Posterior cingulate gyrus (tissue), 11 donors: ENCODE measurements at regions of chr17 and their contacts with region 1.

Region 1: GRCh38 chr17:81484195-81484979 is 28.2 kb downstream of the ACTG1 start:
- DNase-seq: peak; percentile 79 to 99 (median 90)

Region 2: DNA sequence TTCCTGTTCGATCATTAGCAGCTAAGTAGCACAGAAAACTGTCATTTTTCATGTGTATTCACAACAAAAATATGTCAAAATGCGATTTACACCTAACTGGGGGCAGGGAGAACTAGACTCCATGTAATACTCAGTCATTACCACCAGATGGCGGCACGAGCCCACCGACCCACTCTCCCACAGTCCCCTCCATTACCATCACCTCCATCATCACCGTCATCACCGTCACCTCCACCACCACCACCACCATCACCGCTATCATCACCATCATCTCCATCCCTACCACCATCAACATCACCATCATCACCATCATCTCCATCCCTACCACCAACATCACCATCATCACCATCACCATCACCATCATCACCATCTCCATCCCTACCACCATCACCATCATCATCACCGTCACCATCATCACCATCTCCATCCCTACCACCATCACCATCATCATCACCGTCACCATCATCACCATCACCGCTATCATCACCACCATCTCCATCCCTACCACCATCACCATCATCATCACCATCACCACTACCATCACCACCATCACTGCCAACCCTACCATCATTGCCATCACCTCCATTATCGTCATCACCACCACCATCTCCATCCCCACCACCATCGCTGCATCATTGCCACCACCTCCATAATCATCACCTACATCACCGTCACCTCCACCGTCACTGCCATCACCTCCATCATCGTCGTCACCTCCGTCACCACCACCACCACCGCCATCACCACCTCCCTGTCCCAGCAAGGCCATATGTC is 230.8 kb before region 1 on chr17:
- intact Hi-C with region 1: loop called (anchors 1 kb)
- DNase-seq: peak in 7 of 10 donors; percentile 53 to 91 (median 65)

Region 3: GRCh38 chr17:81294856-81295680 is 189.3 kb before region 1 on chr17 and contains the start of gene SLC38A10:
- intact Hi-C with region 1: loop called (anchors 5 kb)
- DNase-seq: peak; percentile 87 to 99 (median 93)

Region 4: DNA sequence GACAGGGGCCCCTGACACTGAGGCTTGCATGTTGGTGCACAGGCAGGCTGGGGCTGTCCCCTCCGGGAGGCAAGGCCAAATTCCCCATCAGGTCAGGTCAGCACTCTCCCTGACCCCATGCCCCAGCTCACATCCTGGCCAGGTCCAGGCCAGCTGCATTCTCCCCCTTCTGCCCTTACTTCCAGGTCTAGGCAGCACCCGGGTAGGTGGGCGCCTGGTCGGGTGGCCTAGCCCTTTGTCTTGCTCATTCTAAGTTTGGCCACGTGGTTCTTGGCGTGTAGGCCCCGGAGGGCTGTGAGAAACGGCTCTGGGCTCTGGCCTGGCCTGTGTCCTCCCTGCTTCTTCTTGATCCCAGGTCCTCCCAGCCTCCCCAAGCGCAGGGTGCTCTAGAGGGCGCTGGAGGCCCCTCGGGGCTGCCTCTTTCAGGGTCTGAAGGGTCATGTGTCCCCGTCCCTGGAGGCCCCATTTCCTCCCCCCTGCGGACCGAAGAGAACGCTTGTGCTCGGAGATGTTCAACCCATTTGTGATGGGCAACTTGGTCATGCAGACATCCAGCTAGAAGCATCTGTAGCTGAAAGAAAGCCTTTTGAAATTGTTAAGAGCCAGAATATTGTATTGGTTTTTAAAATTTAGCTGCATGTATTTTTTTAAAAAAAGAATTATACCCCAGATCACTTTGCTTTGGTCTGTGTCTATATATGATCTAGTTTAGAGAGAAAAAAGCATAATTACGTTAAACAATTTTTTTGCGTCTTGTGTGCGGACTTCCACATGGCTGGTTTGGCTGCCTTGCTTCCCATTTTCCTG is 82.5 kb before region 1 on chr17:
- intact Hi-C with region 1: loop called (anchors 1 kb)
- DNase-seq: peak in 4 of 10 donors; percentile 58 to 94 (median 72)

Region 5: DNA sequence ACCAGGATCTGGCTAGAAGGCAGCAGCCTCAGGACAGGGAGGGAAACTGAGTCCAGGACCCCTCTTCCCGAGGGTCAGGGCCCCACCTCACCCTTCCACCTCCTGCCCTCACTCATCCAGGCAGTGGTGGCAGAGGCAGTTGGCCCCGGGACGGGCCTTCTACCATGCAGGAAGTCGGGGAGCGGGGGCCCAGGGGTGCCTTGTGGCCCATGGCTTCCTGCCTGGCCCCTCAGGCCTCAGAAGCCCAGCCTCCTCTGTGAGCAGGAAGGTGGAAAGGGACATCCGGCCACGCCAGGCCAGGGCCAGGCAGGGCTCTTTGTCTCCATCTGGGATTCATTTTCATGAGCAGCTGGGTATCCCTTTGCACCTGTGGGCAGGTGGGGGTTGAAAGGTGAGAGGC is 30.7 kb before region 1 on chr17:
- intact Hi-C with region 1: no loop called
- DNase-seq: no peak

Region 6: DNA sequence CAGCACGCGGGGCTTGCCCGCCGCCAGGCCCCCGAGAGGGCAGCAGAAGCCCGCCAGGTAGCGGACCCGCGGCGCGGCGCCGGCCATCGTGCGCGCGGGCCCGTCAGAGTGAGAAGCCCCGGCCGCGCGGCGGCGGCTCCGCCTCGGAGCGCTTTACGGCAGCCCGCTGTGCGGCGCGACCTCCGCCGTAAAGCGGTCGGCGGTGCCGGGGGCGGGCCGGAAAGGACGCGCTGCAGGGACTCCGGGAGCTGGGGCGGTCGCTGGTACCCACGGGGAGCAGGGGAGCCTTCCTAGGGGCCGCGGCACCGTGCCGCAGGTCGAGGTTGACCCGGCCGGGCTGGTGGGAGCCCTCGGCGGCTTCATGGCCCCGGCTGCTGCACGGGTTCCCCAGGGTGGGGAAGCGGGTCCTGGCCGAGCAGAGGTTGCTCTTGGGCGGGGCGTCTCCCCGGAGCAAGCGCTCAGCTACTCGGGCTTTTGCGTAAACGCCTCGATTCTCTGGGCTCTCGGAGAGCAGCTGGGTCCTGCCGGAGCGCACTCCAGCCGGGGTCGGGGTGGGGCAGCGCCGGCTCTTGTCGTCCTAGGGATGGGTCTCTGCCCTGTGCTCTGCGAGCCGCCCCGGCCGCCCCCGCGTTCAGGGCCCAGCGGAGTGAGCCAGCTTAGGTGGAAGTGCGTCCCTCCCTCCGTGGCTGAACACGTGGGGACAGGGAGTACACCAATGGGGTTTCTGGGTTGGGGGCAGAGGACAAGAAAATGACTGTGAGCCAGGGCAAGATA is 68.0 kb after region 1 on chr17 and contains the start of gene FAAP100:
- intact Hi-C with region 1: no loop called
- DNase-seq: peak; percentile 59 to 97 (median 72)